Activated CD4-positive, alpha-beta T cell treated with anti-CD3 and anti-CD28 coated beads for 36 hours (primary cell): ENCODE measurements at regions of chr3 and their contacts with region 1.

Region 1: GRCh38 chr3:141105828-141106628 is 54.9 kb downstream of the SPSB4 start:
- DNase-seq: peak; percentile 78
- ATAC-seq: peak; percentile 68
- H3K4me3 Mint-ChIP-seq: no peak overlapping the region
- H3K27ac Mint-ChIP-seq: no peak overlapping the region
- H3K4me1 Mint-ChIP-seq: no peaks in the 10 kb centered on the region
- H3K27me3 Mint-ChIP-seq: no peaks in the 10 kb centered on the region

Region 2: GRCh38 chr3:140682586-140682985 is 423.4 kb before region 1 on chr3:
- CTCF ChIA-PET with region 1: no interaction called
- POLR2A ChIA-PET with region 1: no interaction called
- intact Hi-C with region 1: no loop called
- DNase-seq: no peak
- ATAC-seq: no peak
- H3K4me3 Mint-ChIP-seq: no peak overlapping the region
- H3K27ac Mint-ChIP-seq: no peak overlapping the region
- H3K4me1 Mint-ChIP-seq: no peaks in the 10 kb centered on the region
- H3K27me3 Mint-ChIP-seq: no peaks in the 10 kb centered on the region

Region 3: DNA sequence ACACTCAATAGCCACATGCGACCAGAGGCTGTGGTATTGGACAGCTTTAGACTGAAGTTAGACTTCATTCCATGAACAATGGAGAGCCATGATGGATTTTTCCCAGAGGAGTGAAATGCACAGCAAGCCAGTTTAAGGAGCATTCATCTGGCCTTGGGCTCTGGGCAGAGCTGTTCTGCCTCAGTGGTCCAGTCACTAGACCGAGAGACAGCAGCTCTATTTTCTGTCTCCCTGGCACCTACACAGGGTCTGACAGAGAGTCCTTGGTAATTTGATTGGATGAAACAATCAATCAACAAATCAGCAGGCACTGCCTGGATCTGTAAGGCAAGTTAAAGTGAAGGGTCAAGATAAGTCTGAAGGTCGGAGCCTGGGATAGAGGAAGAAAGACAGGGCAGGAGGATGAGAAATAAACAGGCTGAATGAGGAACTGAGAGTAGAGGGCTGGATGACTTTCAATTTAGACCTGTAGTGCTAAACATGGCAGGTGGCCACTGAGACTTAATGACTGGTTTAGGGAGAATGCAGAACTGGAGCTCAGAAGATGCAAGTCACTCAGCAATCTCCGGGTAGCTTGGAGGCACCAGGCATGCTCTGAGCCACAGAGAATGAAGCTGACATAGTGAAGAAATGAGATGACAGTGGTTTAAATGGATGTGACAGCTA is 262.9 kb before region 1 on chr3:
- CTCF ChIA-PET with region 1: no interaction called
- POLR2A ChIA-PET with region 1: no interaction called
- intact Hi-C with region 1: no loop called
- DNase-seq: no peak
- ATAC-seq: no peak
- H3K4me3 Mint-ChIP-seq: no peak overlapping the region
- H3K27ac Mint-ChIP-seq: no peak overlapping the region
- H3K4me1 Mint-ChIP-seq: peaks cover 12% of the 10 kb centered on the region
- H3K27me3 Mint-ChIP-seq: peaks cover 9% of the 10 kb centered on the region

Region 4: GRCh38 chr3:140898340-140899180 is 207.5 kb before region 1 on chr3:
- CTCF ChIA-PET with region 1: interaction called, 8 read pairs
- POLR2A ChIA-PET with region 1: no interaction called
- intact Hi-C with region 1: loop called (anchors 1 to 2 kb)
- DNase-seq: peak; percentile 11
- ATAC-seq: peak; percentile 66
- H3K4me3 Mint-ChIP-seq: no peak overlapping the region
- H3K27ac Mint-ChIP-seq: no peak overlapping the region
- H3K4me1 Mint-ChIP-seq: no peaks in the 10 kb centered on the region
- H3K27me3 Mint-ChIP-seq: peaks cover 11% of the 10 kb centered on the region

Region 5: DNA sequence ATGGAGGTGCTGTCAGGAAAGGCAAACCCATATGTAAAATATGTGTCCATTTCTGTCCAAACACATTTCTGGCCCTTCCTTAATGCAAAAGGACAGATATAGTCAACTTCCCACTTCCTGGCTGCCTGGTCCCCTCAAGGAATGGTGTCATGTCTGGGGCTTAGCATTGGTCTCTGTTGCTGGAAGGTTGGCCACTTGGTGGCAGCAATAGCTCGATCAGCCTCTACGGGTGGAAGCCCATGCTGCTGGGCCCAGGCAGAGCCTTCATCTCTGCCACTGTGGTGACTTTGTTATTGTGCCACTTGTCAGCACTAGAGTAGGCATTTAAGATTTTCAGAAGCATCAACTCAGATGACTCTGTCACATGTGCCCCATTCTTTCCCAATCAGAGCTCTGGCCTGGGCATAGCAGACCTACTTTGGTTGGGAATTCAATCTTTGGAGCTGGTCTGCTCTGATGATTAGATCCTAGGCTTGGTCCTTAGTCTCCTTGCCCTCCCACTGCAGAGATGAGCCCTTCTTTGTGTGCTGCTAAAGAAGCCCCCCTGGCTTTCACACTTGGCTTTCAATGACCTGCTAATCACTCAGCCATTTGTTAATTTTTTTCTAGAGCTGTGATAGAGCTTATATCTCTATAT is 105.9 kb before region 1 on chr3:
- CTCF ChIA-PET with region 1: interaction called, 19 read pairs
- POLR2A ChIA-PET with region 1: no interaction called
- intact Hi-C with region 1: loop called (anchors 1 kb)
- DNase-seq: peak; percentile 74
- ATAC-seq: peak; percentile 90
- H3K4me3 Mint-ChIP-seq: no peak overlapping the region
- H3K27ac Mint-ChIP-seq: no peak overlapping the region
- H3K4me1 Mint-ChIP-seq: peaks cover 7% of the 10 kb centered on the region
- H3K27me3 Mint-ChIP-seq: no peaks in the 10 kb centered on the region

Region 6: GRCh38 chr3:141011232-141011996 is 94.6 kb before region 1 on chr3:
- CTCF ChIA-PET with region 1: interaction called, 15 read pairs
- POLR2A ChIA-PET with region 1: no interaction called
- intact Hi-C with region 1: loop called (anchors 1 kb)
- DNase-seq: peak; percentile 93
- ATAC-seq: peak; percentile 98
- H3K4me3 Mint-ChIP-seq: no peak overlapping the region
- H3K27ac Mint-ChIP-seq: no peak overlapping the region
- H3K4me1 Mint-ChIP-seq: peaks cover 3% of the 10 kb centered on the region
- H3K27me3 Mint-ChIP-seq: peaks cover 12% of the 10 kb centered on the region

Region 7: GRCh38 chr3:141050576-141051442 is 55.2 kb before region 1 on chr3 and contains the start of gene SPSB4:
- CTCF ChIA-PET with region 1: interaction called, 4 read pairs
- POLR2A ChIA-PET with region 1: no interaction called
- intact Hi-C with region 1: loop called in 1 of 2 experiments (anchors 5 kb)
- DNase-seq: peak; percentile 58
- ATAC-seq: peak; percentile 76
- H3K4me3 Mint-ChIP-seq: peak within 1 kb of the TSS; percentile 61
- H3K27ac Mint-ChIP-seq: no peak within 1 kb of the TSS
- H3K4me1 Mint-ChIP-seq: peaks cover 7% of the 10 kb centered on the region
- H3K27me3 Mint-ChIP-seq: peaks cover 44% of the 10 kb centered on the region
- total RNA-seq, gene SPSB4: not detected